Activated B cell treated with CpG ODN at 0.5 μM for 24 hours (primary cell): ENCODE measurements at regions of chr3 and their contacts with region 1.

Region 1: DNA sequence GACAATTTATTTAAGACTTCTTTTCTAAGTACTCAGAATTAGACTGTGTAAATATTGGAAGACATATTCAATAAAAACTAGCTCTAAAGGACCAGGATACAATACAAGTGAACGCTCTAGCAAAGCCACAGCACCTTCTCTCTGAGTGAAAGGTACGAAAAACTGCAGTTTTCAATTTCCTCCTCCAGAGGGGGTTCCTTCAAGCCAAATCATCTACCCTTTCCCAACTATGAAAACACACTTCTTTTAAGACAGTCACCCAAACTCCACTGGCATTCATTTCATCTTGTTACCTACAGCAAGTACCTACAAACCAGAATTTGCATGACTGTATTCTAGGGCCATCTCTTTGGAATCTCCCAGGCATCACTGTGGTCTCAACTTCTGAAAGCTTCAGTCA is 165.8 kb downstream of the ERC2 start:
- DNase-seq: no peak
- ATAC-seq: no peak
- H3K4me3 Mint-ChIP-seq: no peak overlapping the region
- H3K27ac Mint-ChIP-seq: no peak overlapping the region
- H3K4me1 Mint-ChIP-seq: peaks cover 5% of the 10 kb centered on the region
- H3K27me3 Mint-ChIP-seq: peaks cover 9% of the 10 kb centered on the region
- CTCF ChIP-seq: no peak

Region 2: DNA sequence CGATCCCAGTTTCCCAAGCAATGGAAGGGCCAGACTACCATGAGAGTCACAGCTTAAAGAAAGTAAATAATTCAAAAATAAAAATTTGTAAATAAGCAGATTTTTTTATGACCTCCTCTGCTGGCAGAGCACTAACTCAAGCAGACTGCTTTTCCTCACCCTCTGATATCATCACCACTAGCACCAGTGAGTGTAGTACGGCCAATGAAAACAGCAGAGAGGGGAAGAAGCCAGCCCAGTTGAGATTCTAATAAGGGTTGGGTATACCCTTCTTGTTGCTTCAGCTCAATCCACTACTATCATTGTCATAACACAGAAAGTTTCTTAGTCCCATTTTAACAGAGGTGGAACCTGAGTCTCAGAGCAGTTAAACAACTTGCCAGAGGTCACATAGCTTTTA is 27.3 kb before region 1 on chr3:
- CTCF ChIA-PET with region 1: no interaction called
- POLR2A ChIA-PET with region 1: no interaction called
- intact Hi-C with region 1: no loop called
- DNase-seq: no peak
- ATAC-seq: no peak
- H3K4me3 Mint-ChIP-seq: no peak overlapping the region
- H3K27ac Mint-ChIP-seq: no peak overlapping the region
- H3K4me1 Mint-ChIP-seq: no peaks in the 10 kb centered on the region
- H3K27me3 Mint-ChIP-seq: peaks cover 3% of the 10 kb centered on the region
- CTCF ChIP-seq: no peak

Region 3: DNA sequence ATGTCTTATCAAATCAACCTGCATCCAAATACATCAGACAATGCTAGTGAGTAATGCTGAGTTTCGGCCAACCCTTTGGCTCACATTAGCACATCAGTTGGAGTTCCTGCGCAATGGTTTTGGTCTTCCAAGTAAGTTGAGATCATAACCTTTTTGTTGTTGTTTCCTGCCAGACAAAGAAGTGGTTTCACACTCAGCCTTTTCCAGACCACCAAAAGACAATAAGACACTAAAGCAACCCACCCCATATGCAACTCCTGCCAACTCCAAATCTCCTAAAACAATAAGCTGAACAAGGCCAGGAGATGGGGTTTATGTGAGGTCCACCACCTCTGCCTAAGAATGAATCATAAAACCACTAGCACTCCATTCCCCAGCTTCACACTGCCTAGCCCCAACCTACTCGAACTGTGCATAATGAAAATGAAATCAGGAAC is 11.2 kb before region 1 on chr3:
- CTCF ChIA-PET with region 1: no interaction called
- POLR2A ChIA-PET with region 1: interaction called, 17 read pairs
- intact Hi-C with region 1: no loop called
- DNase-seq: no peak
- ATAC-seq: no peak
- H3K4me3 Mint-ChIP-seq: no peak overlapping the region
- H3K27ac Mint-ChIP-seq: no peak overlapping the region
- H3K4me1 Mint-ChIP-seq: no peaks in the 10 kb centered on the region
- H3K27me3 Mint-ChIP-seq: no peaks in the 10 kb centered on the region
- CTCF ChIP-seq: no peak